IMR-90 (cell line): ENCODE measurements at regions of chr18 and their contacts with region 1.

Region 1: GRCh38 chr18:63320046-63320689 is 599 bp upstream of the BCL2 start:
- DNase-seq: peak; percentile 75
- ATAC-seq: peak; percentile 76
- H3K4me3 ChIP-seq: peak overlapping the region; percentile 63
- H3K27ac ChIP-seq: peak overlapping the region; percentile 30
- H3K4me1 ChIP-seq: peaks cover 10% of the 10 kb centered on the region
- H3K27me3 ChIP-seq: peaks cover 18% of the 10 kb centered on the region
- CTCF ChIP-seq: 0 out of 2 replicates have a peak, but pooled peaks have one; percentile 23
- POLR2A ChIP-seq: no peak
- RAD21 ChIP-seq: no peak

Region 2: GRCh38 chr18:62584241-62585120 is 735.7 kb before region 1 on chr18:
- CTCF ChIA-PET with region 1: no interaction called
- POLR2A ChIA-PET with region 1: no interaction called
- dilution Hi-C with region 1: no loop called
- in situ Hi-C with region 1: no loop called
- intact Hi-C with region 1: loop called (anchors 10 kb)
- DNase-seq: peak; percentile 88
- ATAC-seq: peak; percentile 93
- H3K4me3 ChIP-seq: no peak overlapping the region
- H3K27ac ChIP-seq: no peak overlapping the region
- H3K4me1 ChIP-seq: peaks cover 1% of the 10 kb centered on the region; the same call in 1 of the 2 replicates
- H3K27me3 ChIP-seq: peaks cover 3% of the 10 kb centered on the region; the same call in 1 of the 2 replicates
- CTCF ChIP-seq: peak; percentile 99
- POLR2A ChIP-seq: no peak
- RAD21 ChIP-seq: peak; percentile 91

Region 3: DNA sequence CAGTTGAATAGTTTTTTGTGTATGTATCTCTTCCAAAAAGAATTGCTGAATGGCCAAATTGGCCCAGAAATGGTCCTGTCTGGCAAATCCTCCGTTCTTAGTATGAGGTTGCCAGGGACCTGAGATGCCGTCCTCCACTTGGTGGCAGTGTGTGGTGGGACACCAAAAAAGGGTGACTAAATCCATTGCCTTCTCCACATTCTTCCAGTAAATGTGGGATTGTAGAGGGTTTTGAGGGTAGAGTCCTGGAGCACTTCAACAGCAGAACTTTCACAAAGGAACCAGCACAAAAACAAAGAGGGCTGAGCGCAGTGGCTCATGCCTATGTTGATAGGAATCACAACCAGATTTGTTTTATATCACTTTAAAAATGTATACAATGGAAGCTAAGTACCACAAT is 200.5 kb before region 1 on chr18:
- CTCF ChIA-PET with region 1: interaction called, 5 read pairs
- POLR2A ChIA-PET with region 1: no interaction called
- dilution Hi-C with region 1: no loop called
- in situ Hi-C with region 1: no loop called
- intact Hi-C with region 1: loop called (anchors 1 kb)
- DNase-seq: peak; percentile 8
- ATAC-seq: no peak; the same call in 1 of the 2 replicates
- H3K4me3 ChIP-seq: no peak overlapping the region
- H3K27ac ChIP-seq: no peak overlapping the region
- H3K4me1 ChIP-seq: no peaks in the 10 kb centered on the region
- H3K27me3 ChIP-seq: peaks cover 9% of the 10 kb centered on the region
- CTCF ChIP-seq: peak; percentile 34; the same call in 1 of the 2 replicates
- POLR2A ChIP-seq: no peak
- RAD21 ChIP-seq: peak; percentile 38

Region 4: DNA sequence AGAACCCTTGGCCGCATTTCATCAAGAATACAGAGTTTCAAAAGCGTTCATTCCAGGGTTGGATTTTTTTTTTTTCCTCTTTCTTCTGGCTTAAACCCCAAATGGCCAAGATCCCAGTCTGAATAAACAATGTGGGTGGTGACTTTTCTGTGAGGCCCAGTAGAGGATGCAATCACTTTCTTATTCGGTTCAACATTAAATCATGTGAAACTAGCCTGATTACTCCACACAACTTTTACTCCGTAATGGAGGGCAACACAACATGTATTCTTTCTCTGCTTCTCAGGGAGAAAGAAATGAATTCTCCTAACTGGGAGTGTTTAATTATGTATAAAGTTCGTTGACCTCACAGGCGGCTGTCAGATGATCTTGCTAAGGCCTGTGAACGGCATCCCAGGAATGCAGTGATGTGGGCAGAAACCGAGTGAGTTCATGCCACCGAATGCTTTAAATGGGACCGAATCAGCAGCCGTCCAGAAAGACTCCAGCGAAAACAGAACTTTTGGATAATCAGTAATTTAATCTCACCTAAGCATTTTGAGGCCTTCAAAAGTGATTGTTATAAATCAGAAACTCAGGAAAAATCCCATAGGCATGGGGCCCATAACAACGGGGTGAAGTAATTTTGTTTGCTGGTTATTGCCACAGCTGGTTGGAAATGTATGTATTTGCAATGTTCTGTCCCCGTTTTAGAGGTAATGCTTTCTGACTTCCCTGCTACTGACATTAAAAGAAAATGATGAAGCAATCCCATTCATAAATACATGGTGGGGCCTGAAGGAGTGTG is 82.1 kb before region 1 on chr18:
- CTCF ChIA-PET with region 1: no interaction called
- POLR2A ChIA-PET with region 1: no interaction called
- dilution Hi-C with region 1: no loop called
- in situ Hi-C with region 1: no loop called
- intact Hi-C with region 1: loop called (anchors 5 kb)
- DNase-seq: peak; percentile 85
- ATAC-seq: peak; percentile 94
- H3K4me3 ChIP-seq: peak overlapping the region; percentile 16; the same call in 1 of the 2 replicates
- H3K27ac ChIP-seq: peak overlapping the region; percentile 41; the same call in 1 of the 2 replicates
- H3K4me1 ChIP-seq: peaks cover 8% of the 10 kb centered on the region
- H3K27me3 ChIP-seq: peaks cover 2% of the 10 kb centered on the region
- CTCF ChIP-seq: no peak
- POLR2A ChIP-seq: no peak
- RAD21 ChIP-seq: no peak

Region 5: GRCh38 chr18:63290821-63291200 is 29.4 kb before region 1 on chr18:
- CTCF ChIA-PET with region 1: interaction called, 4 read pairs
- POLR2A ChIA-PET with region 1: no interaction called
- dilution Hi-C with region 1: no loop called
- in situ Hi-C with region 1: no loop called
- intact Hi-C with region 1: loop called (anchors 1 kb)
- DNase-seq: no peak
- ATAC-seq: no peak
- H3K4me3 ChIP-seq: no peak overlapping the region
- H3K27ac ChIP-seq: no peak overlapping the region
- H3K4me1 ChIP-seq: no peaks in the 10 kb centered on the region
- H3K27me3 ChIP-seq: peaks cover 3% of the 10 kb centered on the region
- CTCF ChIP-seq: no peak
- POLR2A ChIP-seq: no peak
- RAD21 ChIP-seq: no peak

Region 6: DNA sequence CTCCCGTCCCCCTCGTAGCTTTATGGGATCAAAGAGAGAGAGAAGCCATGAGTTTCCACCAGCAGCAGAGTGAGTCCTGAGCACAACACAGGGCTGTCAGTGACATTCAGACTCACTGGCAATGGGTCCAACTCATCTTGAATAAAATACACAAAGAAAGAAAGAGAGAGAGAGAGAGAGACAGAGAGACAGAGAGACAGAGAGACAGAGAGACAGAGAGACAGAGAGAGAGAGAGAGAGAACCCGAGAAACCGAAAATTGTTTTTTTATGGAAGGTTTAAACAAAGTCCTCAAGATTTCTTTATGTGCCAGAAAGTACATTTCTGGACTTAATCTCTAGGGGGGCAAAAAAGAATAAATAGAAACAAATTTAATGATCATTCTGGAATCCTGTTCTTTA is 10.9 kb after region 1 on chr18:
- CTCF ChIA-PET with region 1: no interaction called
- POLR2A ChIA-PET with region 1: no interaction called
- dilution Hi-C with region 1: no loop called
- in situ Hi-C with region 1: no loop called
- intact Hi-C with region 1: no loop called
- DNase-seq: no peak
- ATAC-seq: no peak
- H3K4me3 ChIP-seq: no peak overlapping the region
- H3K27ac ChIP-seq: no peak overlapping the region
- H3K4me1 ChIP-seq: peaks cover 5% of the 10 kb centered on the region
- H3K27me3 ChIP-seq: no peaks in the 10 kb centered on the region
- CTCF ChIP-seq: no peak
- POLR2A ChIP-seq: no peak
- RAD21 ChIP-seq: no peak